Activated B cell treated with CpG ODN at 0.5 μM for 24 hours (primary cell): ENCODE measurements at regions of chr13 and their contacts with region 1.

Region 1: DNA sequence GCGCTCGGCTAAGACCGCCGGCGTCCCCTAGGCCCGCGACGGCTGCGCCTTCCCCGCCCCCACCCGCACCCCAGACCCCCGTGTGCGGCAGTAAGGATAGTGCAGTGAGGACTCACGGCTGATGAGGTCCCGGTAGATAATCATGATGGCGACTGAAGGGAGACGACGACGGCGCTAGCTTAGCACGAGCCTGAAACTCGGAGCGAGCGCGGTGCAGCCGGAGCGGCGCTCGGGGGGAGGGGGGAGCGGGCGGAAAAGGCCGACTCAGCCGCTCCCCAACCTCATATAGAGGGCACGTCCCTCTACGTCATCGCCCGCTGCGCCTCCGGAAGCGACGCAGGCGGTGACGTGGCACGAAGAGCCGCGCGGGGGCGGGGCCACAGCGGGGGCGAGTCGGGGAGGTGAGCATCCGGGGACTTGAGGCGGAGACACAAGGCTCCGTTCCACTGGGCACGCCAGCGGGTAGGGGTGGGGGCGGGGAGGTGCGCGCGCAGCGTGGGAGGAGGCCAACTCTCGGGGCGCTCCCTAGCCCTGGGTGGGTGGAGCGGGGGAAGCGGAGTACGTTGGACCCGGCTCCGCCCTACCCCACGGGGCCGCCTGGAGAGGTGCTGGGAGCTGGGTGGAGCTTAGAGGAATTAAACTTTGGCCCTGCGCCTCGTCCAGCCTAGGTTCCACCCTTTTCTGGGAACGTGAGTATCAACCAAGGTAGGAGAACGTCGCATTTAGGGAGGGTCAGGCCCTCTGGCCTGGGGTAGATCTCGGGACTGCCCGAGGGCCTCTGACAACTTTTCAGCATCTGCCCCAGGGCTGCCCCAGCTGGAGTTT is at the start of gene TPT1:
- DNase-seq: peak; percentile 99
- ATAC-seq: peak; percentile 89
- H3K4me3 Mint-ChIP-seq: peak within 1 kb of the TSS; percentile 99
- H3K27ac Mint-ChIP-seq: peak within 1 kb of the TSS; percentile 99
- H3K4me1 Mint-ChIP-seq: peaks cover 56% of the 10 kb centered on the region
- H3K27me3 Mint-ChIP-seq: no peaks in the 10 kb centered on the region
- CTCF ChIP-seq: no peak
- total RNA-seq, gene TPT1: 3,880 and 4,323 TPM in 2 replicates

Region 2: DNA sequence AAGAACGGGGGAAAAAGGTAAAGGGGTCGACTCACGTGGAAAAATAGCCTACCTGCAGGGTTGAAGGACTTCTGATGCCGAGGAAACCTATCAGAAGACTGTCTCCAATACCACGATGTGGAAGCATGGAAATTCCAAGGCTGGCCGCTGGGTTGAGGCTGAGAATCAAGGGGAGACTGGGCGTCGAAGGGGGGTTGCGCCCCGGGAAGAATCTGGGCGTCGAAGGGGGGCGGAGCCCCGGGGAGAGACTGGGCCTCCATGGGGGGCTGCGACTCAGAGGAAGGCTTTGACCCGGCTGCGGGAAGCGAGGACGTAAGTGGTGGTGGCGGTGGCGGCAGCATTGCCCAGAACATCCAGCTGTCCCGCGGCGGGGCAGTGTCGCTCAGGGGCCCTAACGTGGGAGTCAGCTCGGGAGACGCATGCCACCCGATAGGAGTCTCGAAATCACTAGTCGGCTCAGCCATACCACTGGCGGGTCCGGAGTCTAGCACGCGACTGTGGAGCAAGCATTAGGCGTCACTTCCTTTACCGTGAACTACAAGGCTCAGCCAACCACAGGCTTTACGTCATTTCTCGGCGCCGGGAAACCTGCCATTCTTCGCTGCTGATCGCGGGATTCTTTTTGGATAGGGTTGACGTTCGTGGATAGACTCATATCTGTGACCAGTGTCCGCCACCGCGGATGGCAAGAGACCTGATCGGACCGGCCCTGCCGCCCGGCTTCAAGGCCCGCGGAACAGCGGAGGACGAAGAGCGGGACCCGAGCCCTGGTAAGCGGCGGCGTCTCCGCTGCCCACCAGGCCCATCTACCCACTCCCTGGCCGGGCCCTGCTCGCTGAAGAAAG is 351.9 kb before region 1 on chr13 and contains the starts of genes GPALPP1 and NUFIP1:
- CTCF ChIA-PET with region 1: no interaction called
- POLR2A ChIA-PET with region 1: no interaction called
- intact Hi-C with region 1: loop called (anchors 1 kb)
- DNase-seq: peak; percentile 80
- ATAC-seq: peak; percentile 97
- H3K4me3 Mint-ChIP-seq: peak within 1 kb of the TSS; percentile 99
- H3K27ac Mint-ChIP-seq: peak within 1 kb of the TSS; percentile 98
- H3K4me1 Mint-ChIP-seq: peaks cover 37% of the 10 kb centered on the region
- H3K27me3 Mint-ChIP-seq: no peaks in the 10 kb centered on the region
- CTCF ChIP-seq: no peak
- total RNA-seq, gene GPALPP1: 28.8 and 35.8 TPM in 2 replicates
- total RNA-seq, gene NUFIP1: 6.6 and 7.8 TPM in 2 replicates

Region 3: GRCh38 chr13:45367358-45367757 is 26.2 kb after region 1 on chr13:
- CTCF ChIA-PET with region 1: interaction called, 5 read pairs
- POLR2A ChIA-PET with region 1: interaction called, 31 read pairs
- intact Hi-C with region 1: loop called (anchors 1 kb)
- DNase-seq: peak; percentile 56
- ATAC-seq: peak; percentile 100
- H3K4me3 Mint-ChIP-seq: peak overlapping the region; percentile 39
- H3K27ac Mint-ChIP-seq: peak overlapping the region; percentile 82
- H3K4me1 Mint-ChIP-seq: peaks cover 32% of the 10 kb centered on the region
- H3K27me3 Mint-ChIP-seq: no peaks in the 10 kb centered on the region
- CTCF ChIP-seq: no peak

Region 4: GRCh38 chr13:45464687-45465453 is 123.7 kb after region 1 on chr13 and contains the start of gene COG3:
- CTCF ChIA-PET with region 1: no interaction called
- POLR2A ChIA-PET with region 1: interaction called, 20 read pairs
- intact Hi-C with region 1: loop called (anchors 1 kb)
- DNase-seq: peak; percentile 90
- ATAC-seq: peak; percentile 97
- H3K4me3 Mint-ChIP-seq: peak within 1 kb of the TSS; percentile 95
- H3K27ac Mint-ChIP-seq: peak within 1 kb of the TSS; percentile 90
- H3K4me1 Mint-ChIP-seq: peaks cover 41% of the 10 kb centered on the region
- H3K27me3 Mint-ChIP-seq: peaks cover 1% of the 10 kb centered on the region
- CTCF ChIP-seq: no peak
- total RNA-seq, gene COG3: 26.0 and 31.6 TPM in 2 replicates

Region 5: DNA sequence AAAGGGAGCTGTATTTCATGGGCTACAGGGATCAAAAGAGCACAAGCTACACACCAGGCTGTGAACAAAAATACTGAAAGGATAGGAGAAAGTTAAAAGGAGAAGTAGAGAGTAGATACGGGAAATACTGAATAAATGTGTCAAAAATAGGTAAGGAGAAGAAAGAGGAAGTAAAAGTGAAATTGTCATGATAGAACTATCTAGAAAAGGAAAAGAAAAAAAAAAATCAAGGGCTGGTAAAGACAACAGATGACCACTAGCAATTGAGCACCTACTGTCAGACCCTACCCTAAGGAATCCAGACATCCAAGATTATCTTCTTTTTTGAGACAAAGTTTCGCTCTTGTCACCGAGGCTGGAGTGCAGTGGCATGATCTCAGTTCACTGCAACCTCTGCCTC is 1041.1 kb after region 1 on chr13:
- CTCF ChIA-PET with region 1: no interaction called
- POLR2A ChIA-PET with region 1: no interaction called
- intact Hi-C with region 1: loop called (anchors 5 kb)
- DNase-seq: no peak
- ATAC-seq: peak; percentile 42
- H3K4me3 Mint-ChIP-seq: peak overlapping the region; percentile 72
- H3K27ac Mint-ChIP-seq: peak overlapping the region; percentile 93
- H3K4me1 Mint-ChIP-seq: peaks cover 75% of the 10 kb centered on the region
- H3K27me3 Mint-ChIP-seq: no peaks in the 10 kb centered on the region
- CTCF ChIP-seq: no peak